Posterior cingulate gyrus (tissue), 11 donors: ENCODE measurements at regions of chr6 and their contacts with region 1.

Region 1: DNA sequence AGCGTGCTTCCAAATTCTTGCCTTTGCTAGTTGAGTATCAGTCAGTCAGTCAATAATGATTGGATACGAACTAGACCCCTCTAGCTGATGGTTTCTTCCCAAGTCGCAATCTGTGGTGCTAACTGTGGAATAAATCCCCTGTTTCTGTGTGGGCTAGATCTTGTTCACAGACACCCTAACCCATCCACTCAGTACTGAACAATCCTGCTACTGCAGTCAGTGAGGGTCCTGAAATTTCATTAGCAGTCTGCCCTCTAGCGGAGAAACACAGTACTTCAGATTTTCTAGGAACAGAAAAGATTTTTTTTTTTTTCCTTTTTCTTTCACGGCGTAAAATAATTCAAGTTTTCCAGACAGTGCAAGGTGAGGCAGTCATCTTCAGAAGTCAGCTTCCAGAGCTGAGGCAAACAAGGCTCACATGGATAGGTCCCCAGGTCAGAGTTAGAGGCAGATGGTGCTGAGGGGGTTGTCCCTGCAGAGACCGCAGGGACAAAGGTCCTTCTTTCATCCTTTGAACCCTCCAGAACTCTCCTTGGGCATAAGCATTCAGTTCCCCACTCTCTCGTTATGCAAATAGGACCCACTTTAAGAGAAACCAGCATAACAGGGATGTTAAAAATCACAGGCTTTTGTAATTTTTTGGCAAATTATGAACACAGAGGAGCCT is 119.6 kb downstream of the SCML4 start:
- DNase-seq: no peak

Region 2: DNA sequence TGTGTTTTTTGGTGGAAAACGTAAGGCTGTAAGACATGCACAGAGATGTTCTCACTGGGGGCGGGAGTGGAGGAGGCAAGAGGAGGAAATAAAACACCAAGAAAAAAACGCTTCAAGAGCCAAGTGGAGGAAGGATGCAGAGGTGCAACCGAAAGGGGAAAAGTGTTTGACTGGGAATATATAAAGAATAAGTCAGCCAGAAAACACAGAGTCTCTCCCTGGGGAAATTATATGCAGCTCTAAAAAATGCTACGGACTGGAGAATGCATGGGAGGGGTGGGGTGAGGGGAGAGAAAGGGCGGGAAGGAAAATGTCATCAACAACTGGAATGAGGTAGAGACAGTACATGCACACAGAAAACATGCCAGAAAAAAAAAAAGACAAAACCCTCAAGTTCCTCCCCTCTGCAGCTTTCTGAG is 13.8 kb before region 1 on chr6:
- intact Hi-C with region 1: no loop called
- DNase-seq: no peak

Region 3: DNA sequence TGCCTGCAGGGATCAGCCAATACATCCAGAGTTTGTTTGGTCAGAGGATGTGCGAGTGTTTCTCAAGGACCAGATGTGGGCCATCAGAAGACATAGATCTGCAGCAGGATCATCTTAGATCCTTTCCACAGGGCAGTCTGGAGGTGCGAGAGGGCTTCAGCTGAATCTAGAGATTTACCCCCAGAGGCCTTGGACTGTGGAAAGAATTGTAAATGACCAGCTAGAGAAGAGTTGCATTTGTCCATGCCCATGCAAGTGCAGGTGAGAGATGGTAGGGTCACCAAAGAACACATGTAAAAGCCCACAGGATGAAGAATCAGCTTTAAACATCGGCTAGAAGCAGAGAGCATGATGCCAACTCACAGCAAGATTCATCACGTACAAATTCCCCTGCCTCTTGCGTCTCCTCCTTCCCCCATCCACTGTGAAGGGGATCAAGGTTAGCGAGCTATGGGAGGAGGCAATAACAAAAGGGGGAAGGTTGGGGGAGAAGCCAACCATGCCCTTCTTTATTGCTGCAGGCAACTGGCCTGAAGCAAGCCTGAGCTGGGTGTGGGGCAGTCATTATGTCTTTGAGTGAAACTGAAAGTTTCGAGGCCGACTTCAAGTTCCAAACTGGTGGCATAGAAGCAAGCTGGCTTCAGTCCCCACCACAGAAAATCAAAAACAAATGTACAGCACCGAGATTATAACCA is 36.2 kb after region 1 on chr6:
- intact Hi-C with region 1: no loop called
- DNase-seq: no peak

Region 4: GRCh38 chr6:107847844-107848802 is 143.6 kb after region 1 on chr6:
- intact Hi-C with region 1: loop called (anchors 10 kb)
- DNase-seq: peak; percentile 69 to 98 (median 88)